K562 (cell line): ENCODE measurements at regions of chr16 and their contacts with region 1.

Region 1: GRCh38 chr16:23905027-23905426 is 69.2 kb downstream of the PRKCB start:
- DNase-seq: no peak
- ATAC-seq: no peak
- H3K4me3 ChIP-seq: no peak overlapping the region
- H3K27ac ChIP-seq: peak overlapping the region; percentile 81
- H3K4me1 ChIP-seq: peaks cover 33 to 90% of the 10 kb centered on the region in 2 experiments
- H3K27me3 ChIP-seq: no peaks in the 10 kb centered on the region
- CTCF ChIP-seq: no peak
- EP300 ChIP-seq: no peak
- POLR2A ChIP-seq: no peak
- RAD21 ChIP-seq: no peak

Region 2: DNA sequence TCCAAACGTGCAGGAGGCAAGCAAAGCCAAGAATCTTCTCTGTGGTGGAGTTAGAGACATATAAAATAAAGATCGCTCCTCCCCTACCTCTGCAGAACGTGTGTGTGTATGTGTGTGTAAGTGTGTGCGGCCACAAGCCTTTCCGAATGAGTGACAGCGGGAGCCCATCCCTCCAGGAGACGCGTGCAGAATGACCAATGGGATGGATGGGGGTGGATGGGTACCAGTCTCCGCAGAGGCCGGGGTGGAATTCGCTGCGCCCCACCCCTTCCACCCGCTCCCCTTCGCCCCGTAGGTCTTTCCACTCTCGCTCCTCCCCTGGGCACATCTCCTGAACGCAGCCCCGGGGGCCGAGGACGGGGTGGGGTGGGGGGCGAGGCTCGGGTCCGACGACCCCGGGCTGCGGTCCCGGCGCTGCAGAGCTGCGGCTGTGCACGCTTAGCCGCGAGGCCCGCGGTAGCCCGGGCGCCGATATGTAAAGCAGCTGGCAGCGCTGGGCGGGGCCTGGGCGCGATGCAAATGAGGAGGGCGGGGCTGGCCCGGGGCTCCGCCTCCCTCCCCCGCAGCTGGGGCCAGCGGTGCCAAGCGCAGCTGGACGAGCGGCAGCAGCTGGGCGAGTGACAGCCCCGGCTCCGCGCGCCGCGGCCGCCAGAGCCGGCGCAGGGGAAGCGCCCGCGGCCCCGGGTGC is 69.5 kb before region 1 on chr16 and contains the start of gene PRKCB:
- CTCF ChIA-PET with region 1: no interaction called
- POLR2A ChIA-PET with region 1: interaction called, 3 read pairs
- in situ Hi-C with region 1: no loop called
- intact Hi-C with region 1: loop called (anchors 5 kb)
- DNase-seq: peak; percentile 91 to 96 (median 96)
- ATAC-seq: peak; percentile 89
- H3K4me3 ChIP-seq: peak within 1 kb of the TSS; percentile 87
- H3K27ac ChIP-seq: peak within 1 kb of the TSS; percentile 64
- H3K4me1 ChIP-seq: peaks cover 34 to 51% of the 10 kb centered on the region in 2 experiments
- H3K27me3 ChIP-seq: no peaks in the 10 kb centered on the region
- CTCF ChIP-seq: no peak; a peak in 1 of 6 replicates
- EP300 ChIP-seq: no peak
- POLR2A ChIP-seq: peak; percentile 28; the same call in 1 of the 2 replicates
- RAD21 ChIP-seq: no peak
- polyA plus RNA-seq, gene PRKCB: 49.9 to 64.3 TPM

Region 3: GRCh38 chr16:23889189-23889588 is 15.8 kb before region 1 on chr16:
- CTCF ChIA-PET with region 1: no interaction called
- POLR2A ChIA-PET with region 1: interaction called, 27 read pairs
- in situ Hi-C with region 1: no loop called
- intact Hi-C with region 1: no loop called
- DNase-seq: no peak
- ATAC-seq: no peak
- H3K4me3 ChIP-seq: no peak overlapping the region
- H3K27ac ChIP-seq: no peak overlapping the region
- H3K4me1 ChIP-seq: peaks cover 3 to 34% of the 10 kb centered on the region in 2 experiments; a peak in 4 of 5 replicates
- H3K27me3 ChIP-seq: no peaks in the 10 kb centered on the region
- CTCF ChIP-seq: no peak
- EP300 ChIP-seq: no peak
- POLR2A ChIP-seq: no peak
- RAD21 ChIP-seq: no peak

Region 4: GRCh38 chr16:23917621-23918020 is 12.6 kb after region 1 on chr16:
- CTCF ChIA-PET with region 1: no interaction called
- POLR2A ChIA-PET with region 1: interaction called, 17 read pairs
- in situ Hi-C with region 1: no loop called
- intact Hi-C with region 1: no loop called
- DNase-seq: no peak
- ATAC-seq: no peak
- H3K4me3 ChIP-seq: no peak overlapping the region
- H3K27ac ChIP-seq: no peak overlapping the region; the same call in 2 of the 3 replicates
- H3K4me1 ChIP-seq: peaks cover 0 to 3% of the 10 kb centered on the region in 2 experiments; a peak in 3 of 5 replicates
- H3K27me3 ChIP-seq: no peaks in the 10 kb centered on the region
- CTCF ChIP-seq: no peak
- EP300 ChIP-seq: no peak
- POLR2A ChIP-seq: 0 out of 2 replicates have a peak, but pooled peaks have one; percentile 25
- RAD21 ChIP-seq: no peak

Region 5: DNA sequence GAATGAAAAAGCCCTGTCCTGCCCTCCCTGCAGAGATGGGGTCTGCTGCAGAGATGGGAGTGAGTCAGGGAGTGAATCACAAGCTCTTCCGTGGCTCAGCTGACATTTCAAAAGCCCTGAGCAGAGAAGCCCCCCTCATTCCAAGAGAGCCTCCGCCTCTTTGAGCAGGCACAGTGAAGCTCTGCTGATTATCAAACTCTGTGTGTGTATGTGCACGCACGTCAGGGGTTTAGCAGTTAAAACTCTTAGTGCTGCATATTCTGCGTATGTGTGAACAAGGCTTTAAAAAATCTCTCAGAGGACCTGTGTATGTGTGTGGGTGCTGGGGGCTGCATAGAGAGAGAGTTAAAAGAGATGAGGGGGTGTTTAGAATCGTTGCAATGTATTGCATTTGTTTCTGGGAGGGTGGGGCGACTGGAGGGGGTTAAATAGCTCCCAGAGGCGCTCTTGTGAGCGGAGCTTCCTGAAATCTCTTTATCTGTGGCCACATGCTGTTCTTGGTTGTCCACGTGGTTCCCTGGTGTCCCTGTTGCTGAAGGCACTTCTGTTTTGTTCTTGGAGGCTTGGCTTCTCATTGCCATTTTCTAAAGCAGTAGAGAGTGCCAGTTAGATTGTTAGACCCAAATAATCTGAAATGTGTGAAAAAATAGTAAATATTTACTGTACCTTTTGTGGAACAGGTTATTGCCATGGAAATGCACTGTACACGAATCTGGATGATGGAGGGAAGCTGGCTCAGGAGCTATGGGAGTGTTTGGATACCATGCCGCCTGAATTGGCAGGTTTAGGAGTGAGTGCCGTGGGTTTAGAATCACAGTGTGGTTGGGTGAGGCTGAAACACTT is 47.3 kb after region 1 on chr16:
- CTCF ChIA-PET with region 1: no interaction called
- POLR2A ChIA-PET with region 1: interaction called, 8 read pairs
- in situ Hi-C with region 1: no loop called
- intact Hi-C with region 1: loop called (anchors 5 kb)
- DNase-seq: peak; percentile 63 to 91 (median 78)
- ATAC-seq: peak; percentile 87
- H3K4me3 ChIP-seq: peak overlapping the region; percentile 15; the same call in 1 of the 2 replicates
- H3K27ac ChIP-seq: peak overlapping the region; percentile 85
- H3K4me1 ChIP-seq: peaks cover 12 to 61% of the 10 kb centered on the region in 2 experiments
- H3K27me3 ChIP-seq: no peaks in the 10 kb centered on the region
- CTCF ChIP-seq: peak in 1 of 3 experiments; percentile 2; a peak in 1 of 6 replicates
- EP300 ChIP-seq: peak; percentile 86
- POLR2A ChIP-seq: no peak
- RAD21 ChIP-seq: peak in 1 of 2 experiments; percentile 16; a peak in 3 of 4 replicates

Region 6: DNA sequence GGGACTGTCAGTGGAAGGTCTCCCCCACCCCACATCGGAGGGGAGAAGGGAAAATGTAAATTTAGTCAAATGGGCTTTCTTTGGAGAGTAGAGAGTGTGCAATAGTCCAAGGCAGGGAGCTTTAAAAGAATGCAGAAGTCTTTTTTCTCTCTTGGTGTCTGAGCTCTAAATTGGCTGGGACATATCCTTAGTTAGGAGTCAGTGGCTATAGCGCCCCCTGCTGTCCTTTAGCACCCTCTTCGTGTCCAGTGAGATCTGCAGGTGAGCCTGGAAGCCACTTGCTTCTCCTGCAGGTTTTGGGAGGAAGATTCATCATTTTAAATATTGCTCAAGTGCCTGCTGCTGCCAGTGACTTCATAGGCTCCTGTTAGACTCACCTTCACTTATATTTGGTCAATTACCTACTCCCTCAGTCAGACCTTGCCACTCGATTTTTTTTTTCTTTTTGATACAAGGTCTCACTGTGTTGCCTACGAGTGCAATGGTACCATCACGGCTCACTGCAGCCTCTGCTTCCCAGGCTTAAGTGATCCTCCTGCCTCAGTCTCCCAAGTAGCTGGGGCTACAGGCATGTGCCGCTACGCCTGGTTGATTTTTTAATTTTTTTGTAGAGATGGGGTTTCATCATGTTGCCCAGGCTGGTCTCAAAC is 105.5 kb after region 1 on chr16:
- CTCF ChIA-PET with region 1: no interaction called
- POLR2A ChIA-PET with region 1: interaction called, 5 read pairs
- in situ Hi-C with region 1: no loop called
- intact Hi-C with region 1: loop called (anchors 5 kb)
- DNase-seq: peak; percentile 71 to 91 (median 76)
- ATAC-seq: peak; percentile 93
- H3K4me3 ChIP-seq: no peak overlapping the region
- H3K27ac ChIP-seq: no peak overlapping the region
- H3K4me1 ChIP-seq: peaks cover 4 to 12% of the 10 kb centered on the region in 2 experiments; a peak in 3 of 5 replicates
- H3K27me3 ChIP-seq: no peaks in the 10 kb centered on the region
- CTCF ChIP-seq: peak; percentile 83 to 85 (median 85)
- EP300 ChIP-seq: no peak
- POLR2A ChIP-seq: no peak
- RAD21 ChIP-seq: peak; percentile 87 to 89

Region 7: GRCh38 chr16:24069036-24069590 is 164.1 kb after region 1 on chr16:
- CTCF ChIA-PET with region 1: no interaction called
- POLR2A ChIA-PET with region 1: no interaction called
- in situ Hi-C with region 1: no loop called
- intact Hi-C with region 1: no loop called
- DNase-seq: no peak
- ATAC-seq: no peak
- H3K4me3 ChIP-seq: no peak overlapping the region
- H3K27ac ChIP-seq: no peak overlapping the region
- H3K4me1 ChIP-seq: peaks cover 0 to 1% of the 10 kb centered on the region in 2 experiments; a peak in 2 of 5 replicates
- H3K27me3 ChIP-seq: no peaks in the 10 kb centered on the region
- CTCF ChIP-seq: no peak
- EP300 ChIP-seq: no peak
- POLR2A ChIP-seq: no peak
- RAD21 ChIP-seq: no peak